ENCODE measurements at regions of chr1 and their contacts with region 1.

Region 1: DNA sequence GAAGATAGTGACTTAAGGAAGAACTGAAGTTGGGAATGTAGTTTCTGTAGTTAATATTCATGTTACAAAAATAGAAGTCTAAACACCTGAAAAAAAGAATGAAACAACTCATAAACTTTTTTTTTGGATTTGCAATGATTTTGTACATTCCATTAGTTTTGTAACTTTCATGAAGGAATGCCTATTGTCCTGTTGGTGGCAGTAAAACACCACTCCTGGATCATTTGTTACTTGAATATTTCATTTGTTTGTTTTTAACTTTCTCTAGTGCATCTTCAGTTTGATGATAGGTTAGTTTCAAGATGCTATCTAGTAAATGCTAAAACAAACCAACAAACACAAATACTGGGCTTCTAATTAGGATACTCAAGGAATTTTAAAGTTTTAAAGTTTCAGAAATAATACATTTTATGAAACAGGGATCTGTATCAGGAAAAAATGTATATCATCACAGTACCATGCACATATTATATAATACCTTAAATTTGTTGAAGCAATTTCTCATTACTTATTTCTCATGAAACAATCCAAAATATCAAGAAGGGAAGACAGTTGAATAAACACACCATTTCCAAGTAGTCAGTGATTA is 229.7 kb upstream of the CACYBP start:
- DNase-seq: no peak
- H3K4me3 Mint-ChIP-seq: no peak overlapping the region
- H3K27ac Mint-ChIP-seq: no peak overlapping the region
- H3K4me1 Mint-ChIP-seq: no peaks in the 10 kb centered on the region
- H3K27me3 Mint-ChIP-seq: no peaks in the 10 kb centered on the region

Region 2: GRCh38 chr1:174982971-174983689 is 213.1 kb after region 1 on chr1:
- intact Hi-C with region 1: loop called (anchors 1 kb)
- DNase-seq: no peak
- H3K4me3 Mint-ChIP-seq: no peak overlapping the region
- H3K27ac Mint-ChIP-seq: no peak overlapping the region
- H3K4me1 Mint-ChIP-seq: peaks cover 6% of the 10 kb centered on the region
- H3K27me3 Mint-ChIP-seq: no peaks in the 10 kb centered on the region

Region 3: GRCh38 chr1:174999216-174999925 is 229.3 kb after region 1 on chr1:
- intact Hi-C with region 1: loop called (anchors 1 kb)
- DNase-seq: peak; percentile 96
- H3K4me3 Mint-ChIP-seq: no peak overlapping the region
- H3K27ac Mint-ChIP-seq: no peak overlapping the region
- H3K4me1 Mint-ChIP-seq: peaks cover 38% of the 10 kb centered on the region
- H3K27me3 Mint-ChIP-seq: no peaks in the 10 kb centered on the region

Region 4: DNA sequence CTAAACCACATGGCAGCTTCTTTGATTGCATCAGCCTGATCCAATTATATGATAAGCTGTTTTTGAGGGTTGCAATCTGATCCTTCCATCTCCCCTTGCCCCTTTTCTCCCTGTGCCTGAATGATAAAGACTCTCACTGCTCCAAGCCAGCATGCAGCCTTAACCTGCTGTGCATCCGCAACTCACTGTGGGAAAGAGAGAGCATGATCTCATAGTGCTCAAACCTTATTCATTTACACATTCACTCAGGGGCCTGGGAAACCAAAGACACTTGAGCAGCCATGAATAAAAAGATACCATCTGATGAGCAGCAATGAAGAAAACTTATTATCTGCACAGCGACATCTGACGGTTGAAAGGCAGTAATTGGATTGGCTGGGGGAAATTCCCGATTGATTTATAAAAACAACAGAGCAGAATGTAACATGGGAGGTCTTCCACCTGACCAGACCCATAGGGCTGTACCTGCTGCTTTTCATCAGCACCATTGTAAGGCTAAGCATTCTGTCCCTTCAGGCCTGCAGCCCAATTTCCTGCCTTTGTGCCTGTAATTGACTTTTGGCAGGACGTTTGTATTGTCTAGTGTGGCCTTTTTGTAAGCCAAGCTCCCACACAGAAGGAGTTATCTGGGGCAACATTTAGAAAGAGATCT is 360.1 kb after region 1 on chr1:
- intact Hi-C with region 1: loop called (anchors 10 kb)
- DNase-seq: no peak
- H3K4me3 Mint-ChIP-seq: no peak overlapping the region
- H3K27ac Mint-ChIP-seq: no peak overlapping the region
- H3K4me1 Mint-ChIP-seq: peaks cover 6% of the 10 kb centered on the region
- H3K27me3 Mint-ChIP-seq: peaks cover 10% of the 10 kb centered on the region

Measured in activated T-helper 2 cell treated with anti-CD3 and anti-CD28 coated beads, Interferon-gamma antibody, Interleukin-2, Interleukin-4, amounts not matched to agents 10 μg/mL and 5 μg/mL and 100 μg/mL, durations not matched to agents 14 hours and 24 hours and 36 hours (primary cell).